ENCODE measurements at regions of chr7 and their contacts with region 1.

Region 1: GRCh38 chr7:116249708-116250553 is 39.6 kb downstream of the TES start:
- DNase-seq: peak in 1 of 14 experiments; percentile 47
- ATAC-seq: peak; percentile 84
- H3K4me3 ChIP-seq: no peak overlapping the region
- H3K4me3 Mint-ChIP-seq: no peak overlapping the region
- H3K27ac ChIP-seq: no peak overlapping the region
- H3K27ac Mint-ChIP-seq: peak overlapping the region; percentile 43
- H3K4me1 ChIP-seq: peaks cover under 1% of the 10 kb centered on the region
- H3K4me1 Mint-ChIP-seq: peaks cover 63% of the 10 kb centered on the region
- H3K27me3 ChIP-seq: no peaks in the 10 kb centered on the region
- H3K27me3 Mint-ChIP-seq: no peaks in the 10 kb centered on the region
- CTCF ChIP-seq: no peak

Region 2: DNA sequence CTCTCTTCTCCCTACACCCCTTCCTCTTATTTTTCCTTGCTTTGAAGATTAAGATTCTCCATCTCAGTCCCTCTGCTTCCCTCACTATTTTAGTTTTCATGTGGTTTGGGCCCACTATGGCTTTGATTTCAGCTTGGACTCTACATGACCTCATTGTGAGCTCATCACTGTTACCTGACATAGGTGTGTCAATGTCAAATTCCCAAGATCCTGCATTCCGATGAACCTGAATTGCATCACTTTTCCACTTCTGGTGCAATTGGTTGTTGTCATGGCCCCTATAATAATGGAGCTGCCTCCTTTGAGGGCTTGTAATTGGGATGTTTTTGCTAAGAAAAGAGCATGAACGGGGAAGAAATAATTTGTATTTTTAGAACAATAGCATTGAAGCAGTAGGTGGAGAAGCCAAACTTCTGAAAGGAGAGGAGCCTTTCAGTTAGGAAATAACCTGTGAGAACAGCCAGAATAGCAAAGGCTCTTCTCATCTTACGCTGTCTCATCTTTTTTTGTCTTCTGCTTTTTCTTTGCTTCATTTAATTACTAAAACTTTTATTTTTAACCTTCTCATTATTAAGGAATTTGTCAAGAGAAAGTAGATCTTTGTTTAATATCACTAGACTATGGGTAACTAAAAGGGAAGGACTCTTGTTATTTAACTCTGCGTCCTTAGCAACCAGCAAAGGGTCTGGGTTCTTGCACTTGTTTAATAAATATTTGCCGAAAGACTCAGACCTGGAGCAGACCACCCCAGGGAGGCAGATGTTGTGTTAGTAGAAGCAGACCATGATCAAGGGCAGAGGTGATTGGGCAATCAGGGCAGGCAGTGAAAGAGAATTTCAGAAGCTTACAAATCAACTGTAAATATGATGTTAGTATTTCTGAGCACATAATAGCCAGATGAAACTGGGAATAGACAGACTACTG is 55.8 kb after region 1 on chr7:
- CTCF ChIA-PET with region 1: no interaction called
- POLR2A ChIA-PET with region 1: no interaction called
- intact Hi-C with region 1: loop called in 1 of 2 experiments (anchors 10 kb)
- DNase-seq: no peak
- ATAC-seq: no peak
- H3K4me3 ChIP-seq: no peak overlapping the region
- H3K4me3 Mint-ChIP-seq: no peak overlapping the region
- H3K27ac ChIP-seq: no peak overlapping the region
- H3K27ac Mint-ChIP-seq: no peak overlapping the region
- H3K4me1 ChIP-seq: no peaks in the 10 kb centered on the region
- H3K4me1 Mint-ChIP-seq: no peaks in the 10 kb centered on the region
- H3K27me3 ChIP-seq: peaks cover 0 to 4% of the 10 kb centered on the region in 2 experiments
- H3K27me3 Mint-ChIP-seq: peaks cover 9% of the 10 kb centered on the region
- CTCF ChIP-seq: no peak

Measured in CD4-positive, alpha-beta T cell (primary cell).